Activated naive CD4-positive, alpha-beta T cell treated with anti-CD3 and anti-CD28 coated beads for 36 hours (primary cell): ENCODE measurements at regions of chr1 and their contacts with region 1.

Region 1: DNA sequence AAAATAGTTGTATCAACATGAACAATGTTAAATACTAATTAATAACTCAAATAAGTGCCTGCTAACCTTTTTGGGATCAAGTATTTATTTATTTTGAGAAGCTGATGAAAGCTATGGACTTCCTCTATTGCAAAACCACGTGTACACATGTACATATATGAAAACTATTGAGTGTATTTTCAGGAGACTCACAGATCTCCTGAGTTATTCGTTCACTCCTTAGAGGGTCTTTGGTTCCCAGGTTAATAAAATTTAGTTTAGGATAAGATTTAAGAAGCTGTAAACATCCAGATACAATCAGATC is 130.5 kb downstream of the DISC1 start:
- DNase-seq: no peak
- H3K4me3 Mint-ChIP-seq: no peak overlapping the region
- H3K27ac Mint-ChIP-seq: no peak overlapping the region
- H3K4me1 Mint-ChIP-seq: no peaks in the 10 kb centered on the region
- H3K27me3 Mint-ChIP-seq: no peaks in the 10 kb centered on the region

Region 2: GRCh38 chr1:231528172-231529029 is 228.7 kb before region 1 on chr1 and contains the start of gene TSNAX:
- CTCF ChIA-PET with region 1: no interaction called
- intact Hi-C with region 1: no loop called
- DNase-seq: peak; percentile 86
- H3K4me3 Mint-ChIP-seq: peak within 1 kb of the TSS; percentile 96
- H3K27ac Mint-ChIP-seq: peak within 1 kb of the TSS; percentile 97
- H3K4me1 Mint-ChIP-seq: peaks cover 47% of the 10 kb centered on the region
- H3K27me3 Mint-ChIP-seq: no peaks in the 10 kb centered on the region
- total RNA-seq, gene TSNAX: 25.7 to 28.2 TPM

Region 3: GRCh38 chr1:231734417-231734816 is 22.6 kb before region 1 on chr1:
- CTCF ChIA-PET with region 1: interaction called, 13 read pairs
- intact Hi-C with region 1: no loop called
- DNase-seq: peak; percentile 15
- H3K4me3 Mint-ChIP-seq: no peak overlapping the region
- H3K27ac Mint-ChIP-seq: no peak overlapping the region
- H3K4me1 Mint-ChIP-seq: no peaks in the 10 kb centered on the region
- H3K27me3 Mint-ChIP-seq: no peaks in the 10 kb centered on the region

Region 4: DNA sequence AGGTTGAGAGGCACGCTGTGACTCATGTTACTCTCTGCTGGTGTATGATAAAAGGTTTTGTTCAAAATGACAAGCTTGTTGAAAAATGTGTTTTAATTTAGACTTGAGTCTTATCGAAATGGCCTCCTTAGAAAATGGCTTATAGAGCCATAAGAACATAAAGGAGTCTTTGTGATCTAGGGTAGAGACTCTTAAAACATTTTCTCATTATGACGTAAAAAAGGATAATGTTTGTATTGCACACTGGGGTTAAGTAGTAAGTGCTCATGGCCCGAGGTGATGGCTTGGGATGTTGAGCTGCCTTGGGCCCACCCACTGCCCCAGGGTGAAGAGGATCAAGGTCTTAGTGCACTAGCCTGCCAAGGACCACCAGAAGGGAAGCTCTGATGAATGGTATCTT is 13.1 kb before region 1 on chr1:
- CTCF ChIA-PET with region 1: interaction called, 12 read pairs
- intact Hi-C with region 1: no loop called
- DNase-seq: no peak
- H3K4me3 Mint-ChIP-seq: no peak overlapping the region
- H3K27ac Mint-ChIP-seq: no peak overlapping the region
- H3K4me1 Mint-ChIP-seq: no peaks in the 10 kb centered on the region
- H3K27me3 Mint-ChIP-seq: no peaks in the 10 kb centered on the region

Region 5: GRCh38 chr1:231770506-231771175 is 13.6 kb after region 1 on chr1:
- CTCF ChIA-PET with region 1: interaction called, 32 read pairs
- intact Hi-C with region 1: no loop called
- DNase-seq: no peak
- H3K4me3 Mint-ChIP-seq: no peak overlapping the region
- H3K27ac Mint-ChIP-seq: no peak overlapping the region
- H3K4me1 Mint-ChIP-seq: no peaks in the 10 kb centered on the region
- H3K27me3 Mint-ChIP-seq: no peaks in the 10 kb centered on the region

Region 6: DNA sequence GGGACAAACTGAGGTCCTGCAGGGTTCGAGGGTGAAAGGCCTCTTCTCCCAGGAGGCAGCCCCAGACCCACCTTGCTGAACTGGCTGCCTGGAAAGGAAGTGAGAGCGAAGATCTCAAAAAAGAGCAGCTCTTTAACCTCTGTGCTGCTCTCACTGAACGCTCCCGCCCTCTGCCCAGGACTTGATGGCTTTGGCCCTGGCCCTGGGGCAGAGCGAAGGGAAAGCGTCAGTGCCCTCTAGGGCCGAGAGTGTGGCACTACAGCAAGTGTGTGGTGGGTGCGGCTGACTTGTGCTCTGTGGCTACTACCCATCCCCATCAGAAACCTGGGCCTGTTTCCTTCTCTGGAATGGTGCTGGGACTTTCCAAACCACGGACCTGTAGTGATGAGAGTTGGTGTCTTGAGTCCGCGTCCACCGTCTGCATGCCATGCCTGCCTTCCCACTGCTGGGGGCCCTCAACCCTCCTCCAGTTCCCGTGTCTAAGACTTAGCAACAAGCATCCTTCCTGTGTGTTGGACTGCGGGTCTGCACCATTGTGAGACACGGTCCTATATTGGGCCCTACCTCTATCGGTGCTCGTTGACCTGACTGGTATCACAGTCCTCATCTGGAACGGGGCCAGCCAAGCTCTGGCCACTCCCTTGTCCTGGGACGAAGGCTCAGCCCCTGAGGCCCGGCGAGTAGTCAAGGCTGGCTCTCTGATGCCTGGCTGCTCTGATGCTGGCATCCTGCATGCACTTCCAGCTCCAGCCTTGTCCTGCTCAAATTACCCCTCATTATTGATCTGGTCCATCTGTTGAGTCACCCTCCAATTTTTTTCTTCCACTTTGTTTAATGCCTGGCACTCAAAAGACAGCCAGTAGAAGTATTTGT is 49.8 kb after region 1 on chr1:
- CTCF ChIA-PET with region 1: interaction called, 14 read pairs
- intact Hi-C with region 1: loop called (anchors 1 kb)
- DNase-seq: peak; percentile 58
- H3K4me3 Mint-ChIP-seq: no peak overlapping the region
- H3K27ac Mint-ChIP-seq: no peak overlapping the region
- H3K4me1 Mint-ChIP-seq: no peaks in the 10 kb centered on the region
- H3K27me3 Mint-ChIP-seq: no peaks in the 10 kb centered on the region